Activated naive CD4-positive, alpha-beta T cell treated with anti-CD3 and anti-CD28 coated beads for 36 hours (primary cell): ENCODE measurements at regions of chr15 and their contacts with region 1.

Region 1: GRCh38 chr15:74373731-74374647 is 6.5 kb upstream of the CYP11A1 start:
- DNase-seq: peak; percentile 97
- H3K4me3 Mint-ChIP-seq: peak overlapping the region; percentile 75
- H3K27ac Mint-ChIP-seq: no peak overlapping the region
- H3K4me1 Mint-ChIP-seq: peaks cover 31% of the 10 kb centered on the region
- H3K27me3 Mint-ChIP-seq: peaks cover 1% of the 10 kb centered on the region

Region 2: DNA sequence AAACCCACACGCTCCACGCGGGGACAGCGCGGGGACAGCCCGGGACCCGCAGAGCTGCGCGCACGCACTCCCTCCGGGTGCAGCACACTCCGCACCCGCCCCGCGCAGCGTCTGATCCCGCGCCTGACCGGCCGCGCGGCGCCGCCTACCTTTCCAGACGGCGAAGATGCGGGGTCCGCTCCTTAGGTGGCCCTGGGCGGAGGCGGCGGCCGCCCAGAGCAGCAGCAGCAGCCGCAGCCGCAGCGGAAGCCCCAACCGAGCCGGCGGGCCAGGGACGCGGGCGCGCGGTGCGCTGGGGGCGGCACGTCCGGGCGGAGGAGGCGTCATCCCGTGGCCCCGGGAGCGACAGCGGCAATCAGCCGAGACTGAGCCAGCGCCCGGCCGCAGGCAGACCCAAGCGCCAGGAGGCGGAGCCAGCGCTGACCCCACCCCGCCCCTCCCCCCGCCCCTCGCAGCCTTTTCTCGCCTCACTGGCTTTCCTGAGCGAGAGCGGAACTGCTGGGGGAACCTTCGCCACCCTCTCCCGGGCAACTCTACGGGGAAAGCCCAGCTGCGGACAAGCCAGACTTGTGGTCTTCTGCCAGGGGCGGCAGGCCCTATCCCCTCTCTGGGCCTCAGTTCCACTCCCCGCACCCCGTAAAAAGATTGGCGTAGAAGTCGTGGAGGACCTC is 59.7 kb after region 1 on chr15 and contains the start of gene SEMA7A:
- CTCF ChIA-PET with region 1: interaction called, 399 read pairs
- intact Hi-C with region 1: loop called (anchors 1 kb)
- DNase-seq: peak; percentile 87
- H3K4me3 Mint-ChIP-seq: peak within 1 kb of the TSS; percentile 90
- H3K27ac Mint-ChIP-seq: peak within 1 kb of the TSS; percentile 88
- H3K4me1 Mint-ChIP-seq: peaks cover 72% of the 10 kb centered on the region
- H3K27me3 Mint-ChIP-seq: no peaks in the 10 kb centered on the region
- total RNA-seq, gene SEMA7A: 45.7 to 46.9 TPM

Region 3: DNA sequence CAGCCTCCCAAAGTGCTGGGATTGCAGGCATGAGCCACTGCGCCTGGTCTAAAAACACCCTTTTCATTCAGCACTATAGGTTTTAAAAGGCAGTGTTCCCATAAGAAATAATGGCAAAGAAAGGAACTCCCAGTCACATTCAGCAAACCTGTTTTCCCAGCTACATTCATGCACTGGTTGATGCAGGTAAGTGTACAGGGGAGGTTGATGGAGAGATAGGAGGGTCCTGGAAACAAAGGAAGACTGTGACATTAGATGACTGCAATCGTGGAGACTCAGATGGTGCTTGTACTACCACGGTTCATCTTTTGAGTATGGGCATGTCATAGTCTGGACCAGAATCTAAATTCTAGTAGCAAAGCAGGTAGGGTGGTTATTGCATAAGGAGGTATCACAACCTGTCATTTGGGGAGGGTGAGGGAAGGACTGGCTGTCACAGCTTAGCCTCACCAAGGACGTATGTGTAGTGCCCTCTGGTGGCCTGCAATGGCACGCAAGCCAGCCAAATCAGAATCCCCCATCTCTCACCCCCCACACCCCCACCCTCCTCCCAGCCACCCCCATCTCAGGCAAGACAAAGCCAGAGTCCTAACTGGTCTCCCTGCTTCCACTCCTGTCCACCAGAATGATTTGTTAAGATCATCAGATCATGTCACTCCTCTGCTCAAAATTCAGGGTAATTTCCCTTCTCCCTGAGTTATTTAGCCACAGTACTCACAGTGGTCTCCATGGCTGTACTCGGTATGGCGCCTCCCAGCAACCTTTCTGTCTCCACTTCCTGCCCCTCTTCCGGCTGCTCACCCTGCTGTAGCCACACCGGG is 115.7 kb after region 1 on chr15:
- CTCF ChIA-PET with region 1: interaction called, 7 read pairs
- intact Hi-C with region 1: loop called (anchors 1 kb)
- DNase-seq: peak; percentile 83
- H3K4me3 Mint-ChIP-seq: no peak overlapping the region
- H3K27ac Mint-ChIP-seq: no peak overlapping the region
- H3K4me1 Mint-ChIP-seq: peaks cover 9% of the 10 kb centered on the region
- H3K27me3 Mint-ChIP-seq: no peaks in the 10 kb centered on the region

Region 4: GRCh38 chr15:74635228-74635627 is 261.2 kb after region 1 on chr15:
- CTCF ChIA-PET with region 1: interaction called, 11 read pairs
- intact Hi-C with region 1: loop called (anchors 1 kb)
- DNase-seq: peak; percentile 86
- H3K4me3 Mint-ChIP-seq: no peak overlapping the region
- H3K27ac Mint-ChIP-seq: no peak overlapping the region
- H3K4me1 Mint-ChIP-seq: no peaks in the 10 kb centered on the region
- H3K27me3 Mint-ChIP-seq: no peaks in the 10 kb centered on the region

Region 5: GRCh38 chr15:74653426-74654123 is 279.6 kb after region 1 on chr15:
- CTCF ChIA-PET with region 1: no interaction called
- intact Hi-C with region 1: no loop called
- DNase-seq: no peak
- H3K4me3 Mint-ChIP-seq: no peak overlapping the region
- H3K27ac Mint-ChIP-seq: no peak overlapping the region
- H3K4me1 Mint-ChIP-seq: peaks cover 15% of the 10 kb centered on the region
- H3K27me3 Mint-ChIP-seq: no peaks in the 10 kb centered on the region